ENCODE measurements at regions of chr3 and their contacts with region 1.

Region 1: GRCh38 chr3:153768561-153769469 is 352.4 kb upstream of the ARHGEF26 start:
- DNase-seq: peak; percentile 25 to 57 (median 45)
- H3K4me3 ChIP-seq: no peak overlapping the region
- H3K4me3 Mint-ChIP-seq: no peak overlapping the region
- H3K27ac ChIP-seq: no peak overlapping the region
- H3K27ac Mint-ChIP-seq: peak overlapping the region in 1 of 8 donors; percentile 51
- H3K4me1 ChIP-seq: no peaks in the 10 kb centered on the region
- H3K4me1 Mint-ChIP-seq: peaks cover 0 to 5% (median 2%) of the 10 kb centered on the region in 3 donors
- H3K27me3 ChIP-seq: no peaks in the 10 kb centered on the region
- H3K27me3 Mint-ChIP-seq: peaks cover 5 to 30% of the 10 kb centered on the region in 2 donors

Region 2: DNA sequence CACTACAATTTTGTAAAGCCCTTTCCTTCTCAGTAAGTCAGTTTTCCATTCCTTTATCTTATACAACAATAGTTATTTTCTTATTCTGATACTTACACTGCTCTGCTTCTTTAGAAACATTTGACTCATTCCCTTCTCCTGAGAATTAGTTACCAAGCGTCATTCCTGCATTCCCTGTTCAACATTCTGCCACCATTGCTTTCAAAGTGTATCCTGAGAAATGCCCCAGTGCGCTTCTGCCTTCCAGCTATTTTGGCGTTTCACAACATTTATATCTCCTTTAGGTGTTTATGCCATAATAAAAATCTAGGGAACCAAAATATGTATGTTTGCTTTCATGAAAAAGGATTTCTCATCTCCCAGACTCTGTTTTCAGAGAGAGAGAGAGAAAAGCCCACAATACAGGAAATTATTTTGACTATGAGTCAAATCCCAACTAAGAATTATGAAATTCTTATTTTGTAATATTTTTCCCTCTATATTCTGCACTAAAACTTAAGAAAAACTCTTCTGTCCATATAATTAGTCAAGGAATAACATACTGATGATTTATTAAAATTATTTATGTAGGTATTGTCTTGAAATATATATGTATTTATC is 725.0 kb before region 1 on chr3:
- CTCF ChIA-PET with region 1: interaction called, 12 read pairs
- POLR2A ChIA-PET with region 1: no interaction called
- DNase-seq: no peak
- H3K4me3 ChIP-seq: no peak overlapping the region
- H3K4me3 Mint-ChIP-seq: no peak overlapping the region
- H3K27ac ChIP-seq: no peak overlapping the region
- H3K27ac Mint-ChIP-seq: no peak overlapping the region
- H3K4me1 ChIP-seq: no peaks in the 10 kb centered on the region
- H3K4me1 Mint-ChIP-seq: peaks cover 3 to 8% (median 4%) of the 10 kb centered on the region in 3 donors
- H3K27me3 ChIP-seq: no peaks in the 10 kb centered on the region
- H3K27me3 Mint-ChIP-seq: peaks cover 5 to 7% of the 10 kb centered on the region in 2 donors

Region 3: GRCh38 chr3:153756816-153757215 is 12.0 kb before region 1 on chr3:
- CTCF ChIA-PET with region 1: interaction called, 10 read pairs
- POLR2A ChIA-PET with region 1: no interaction called
- DNase-seq: no peak
- H3K4me3 ChIP-seq: no peak overlapping the region
- H3K4me3 Mint-ChIP-seq: no peak overlapping the region
- H3K27ac ChIP-seq: no peak overlapping the region
- H3K27ac Mint-ChIP-seq: no peak overlapping the region
- H3K4me1 ChIP-seq: no peaks in the 10 kb centered on the region
- H3K4me1 Mint-ChIP-seq: no peaks in the 10 kb centered on the region
- H3K27me3 ChIP-seq: no peaks in the 10 kb centered on the region
- H3K27me3 Mint-ChIP-seq: peaks cover 6 to 9% of the 10 kb centered on the region in 2 donors